ENCODE measurements at regions of chr11 and their contacts with region 1.

Region 1: DNA sequence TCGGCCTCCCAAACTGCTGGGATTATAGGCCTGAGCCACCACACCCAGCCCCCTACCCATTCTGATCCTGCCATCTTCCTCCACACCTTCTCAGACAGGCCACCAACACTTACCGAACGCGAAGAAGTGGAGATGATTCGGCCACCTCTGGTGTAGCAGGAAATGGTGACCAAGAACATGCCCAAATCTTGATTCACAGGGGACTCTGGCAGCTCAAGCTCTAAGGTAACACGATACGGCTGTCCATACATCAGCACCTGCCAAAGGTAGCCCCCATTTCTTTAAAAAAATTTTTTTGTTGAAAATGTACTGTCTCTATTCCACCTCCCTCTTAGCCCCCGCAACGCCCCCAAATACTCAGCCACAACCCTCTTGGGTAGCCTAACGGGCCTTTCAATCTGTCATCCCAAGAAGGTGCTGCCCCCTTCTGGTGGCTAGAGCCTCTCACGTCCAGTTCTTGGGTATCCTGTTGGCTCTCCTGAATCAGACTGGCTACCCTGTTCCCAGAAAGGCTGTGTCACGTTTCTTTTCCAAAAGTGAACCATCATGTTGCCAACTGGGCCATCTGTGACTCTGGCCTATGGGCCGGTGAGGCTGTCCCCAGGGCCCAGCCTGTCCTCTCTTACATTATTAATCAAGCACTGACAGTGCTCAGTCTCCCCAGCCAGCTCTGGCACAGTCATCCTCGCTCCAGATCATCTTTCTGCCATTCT is 5.3 kb upstream of the LRRN4CL start:
- DNase-seq: peak in 1 of 2 experiments; percentile 87
- H3K4me3 ChIP-seq: no peak overlapping the region
- H3K27ac ChIP-seq: no peak overlapping the region
- H3K4me1 ChIP-seq: no peaks in the 10 kb centered on the region; a peak in 1 of 7 replicates
- H3K27me3 ChIP-seq: no peaks in the 10 kb centered on the region
- CTCF ChIP-seq: peak; percentile 76 to 89 (median 81)
- EP300 ChIP-seq: no peak
- POLR2A ChIP-seq: no peak
- RAD21 ChIP-seq: peak; percentile 72 to 84

Region 2: GRCh38 chr11:62645956-62646824 is 48.4 kb before region 1 on chr11 and contains the start of gene GANAB:
- CTCF ChIA-PET with region 1: interaction called, 10 read pairs
- POLR2A ChIA-PET with region 1: interaction called, 2,041 read pairs
- DNase-seq: peak; percentile 87 to 96
- H3K4me3 ChIP-seq: peak within 1 kb of the TSS; percentile 71 to 99 (median 90)
- H3K27ac ChIP-seq: peak within 1 kb of the TSS; percentile 90
- H3K4me1 ChIP-seq: no peaks in the 10 kb centered on the region; a peak in 2 of 7 replicates
- H3K27me3 ChIP-seq: no peaks in the 10 kb centered on the region
- CTCF ChIP-seq: no peak
- EP300 ChIP-seq: no peak
- POLR2A ChIP-seq: peak; percentile 82 to 99
- RAD21 ChIP-seq: no peak
- total RNA-seq, gene GANAB: 326 and 330 TPM in 2 replicates

Region 3: GRCh38 chr11:62671575-62672389 is 22.8 kb before region 1 on chr11 and contains the starts of genes LBHD1 and UQCC3:
- CTCF ChIA-PET with region 1: interaction called, 16 read pairs
- POLR2A ChIA-PET with region 1: interaction called, 2,041 read pairs
- DNase-seq: peak; percentile 41 to 88
- H3K4me3 ChIP-seq: peak within 1 kb of the TSS; percentile 88 to 97 (median 92)
- H3K27ac ChIP-seq: peak within 1 kb of the TSS; percentile 63
- H3K4me1 ChIP-seq: peaks cover 2 to 8% (median 2%) of the 10 kb centered on the region in 4 experiments; a peak in 5 of 7 replicates
- H3K27me3 ChIP-seq: no peaks in the 10 kb centered on the region
- CTCF ChIP-seq: no peak
- EP300 ChIP-seq: no peak
- POLR2A ChIP-seq: peak in 1 of 2 experiments; percentile 71; a peak in 2 of 3 replicates
- RAD21 ChIP-seq: peak in 1 of 2 experiments; percentile 1; a peak in 1 of 4 replicates
- total RNA-seq, gene LBHD1: 3.6 and 5.2 TPM in 2 replicates
- total RNA-seq, gene UQCC3: 14.2 and 15.2 TPM in 2 replicates

Region 4: DNA sequence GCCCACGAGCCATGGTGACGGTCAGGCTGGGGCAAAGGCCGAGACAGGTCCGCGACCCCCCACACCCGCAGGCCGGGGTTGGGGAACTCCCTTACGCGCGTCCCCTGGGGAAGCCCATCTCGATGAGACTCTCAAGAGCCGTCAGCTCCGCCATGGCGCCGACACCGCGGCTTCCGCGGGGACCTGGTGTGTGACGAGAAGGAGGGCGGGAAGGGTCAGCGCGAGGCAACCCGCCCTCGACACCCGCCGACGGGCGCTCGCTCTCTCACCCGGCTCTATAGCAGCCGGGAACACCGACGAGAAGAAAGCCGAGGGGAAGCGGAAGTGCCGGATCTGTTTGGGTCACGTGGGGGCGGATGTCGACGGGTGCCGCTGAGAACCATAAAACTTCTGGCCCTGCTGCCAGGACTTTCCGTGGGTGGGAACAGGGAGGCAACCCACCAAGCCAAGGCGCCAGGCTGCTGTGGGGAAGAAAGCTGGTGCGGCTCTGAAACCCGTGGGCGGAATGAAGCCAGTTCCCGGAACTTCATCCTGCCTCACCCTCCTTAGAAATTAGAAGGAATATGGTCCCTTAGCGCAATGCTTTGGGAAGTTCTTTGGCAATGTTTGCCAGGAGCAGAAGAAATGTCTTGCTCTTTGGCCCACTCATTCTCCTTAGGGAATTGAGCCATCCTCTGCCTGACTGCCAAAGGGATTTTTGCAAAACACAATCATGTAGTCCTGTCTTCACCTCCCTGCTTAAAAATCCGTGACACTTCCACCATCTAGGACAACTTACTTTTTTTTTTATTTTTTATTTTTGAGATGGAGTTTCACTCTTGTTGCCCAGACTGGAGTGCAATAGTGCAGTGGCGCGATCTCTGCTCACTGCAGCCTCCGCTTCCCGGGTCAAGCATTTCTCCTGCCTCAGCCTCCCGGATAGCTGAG is 15.6 kb before region 1 on chr11 and contains the start of gene UBXN1:
- CTCF ChIA-PET with region 1: interaction called, 114 read pairs
- POLR2A ChIA-PET with region 1: interaction called, 2,041 read pairs
- DNase-seq: peak in 1 of 2 experiments; percentile 88
- H3K4me3 ChIP-seq: peak within 1 kb of the TSS; percentile 78 to 98 (median 88)
- H3K27ac ChIP-seq: peak within 1 kb of the TSS; percentile 68
- H3K4me1 ChIP-seq: peaks cover 2 to 8% (median 4%) of the 10 kb centered on the region in 4 experiments; a peak in 4 of 7 replicates
- H3K27me3 ChIP-seq: no peaks in the 10 kb centered on the region
- CTCF ChIP-seq: no peak; a peak in 1 of 4 replicates
- EP300 ChIP-seq: no peak
- POLR2A ChIP-seq: peak; percentile 26 to 79
- RAD21 ChIP-seq: no peak
- total RNA-seq, gene UBXN1: 104 and 114 TPM in 2 replicates

Measured in H1 (cell line).